Head of caudate nucleus (tissue), 42 donors: ENCODE measurements at regions of chr2 and their contacts with region 1.

Region 1: GRCh38 chr2:38581193-38582147 is 21.3 kb downstream of the HNRNPLL start:
- DNase-seq: peak in 39 of 42 donors; percentile 38 to 86 (median 61)

Region 2: GRCh38 chr2:37653805-37654378 is 927.6 kb before region 1 on chr2:
- intact Hi-C with region 1: no loop called
- DNase-seq: peak in 29 of 42 donors; percentile 17 to 58 (median 33)

Region 3: GRCh38 chr2:38740851-38741731 is 159.6 kb after region 1 on chr2:
- intact Hi-C with region 1: loop called (anchors 5 kb)
- DNase-seq: peak in 5 of 42 donors; percentile 20 to 51 (median 41)